Esophagus muscularis mucosa (tissue), 4 donors: ENCODE measurements at regions of chr22 and their contacts with region 1.

Region 1: GRCh38 chr22:30386960-30387827 is at the start of gene RNF215:
- DNase-seq: peak; percentile 93
- H3K4me3 ChIP-seq: peak within 1 kb of the TSS; percentile 63 to 92 (median 64)
- H3K27ac ChIP-seq: peak within 1 kb of the TSS; percentile 75 to 82 (median 78)
- H3K4me1 ChIP-seq: peaks cover 11 to 17% (median 15%) of the 10 kb centered on the region in 4 donors
- H3K27me3 ChIP-seq: no peaks in the 10 kb centered on the region
- CTCF ChIP-seq: peak; percentile 95 to 98 (median 96)
- EP300 ChIP-seq: no peak
- POLR2A ChIP-seq: no peak
- total RNA-seq, gene RNF215: 6.6 to 18.5 (median 15.0) TPM

Region 2: DNA sequence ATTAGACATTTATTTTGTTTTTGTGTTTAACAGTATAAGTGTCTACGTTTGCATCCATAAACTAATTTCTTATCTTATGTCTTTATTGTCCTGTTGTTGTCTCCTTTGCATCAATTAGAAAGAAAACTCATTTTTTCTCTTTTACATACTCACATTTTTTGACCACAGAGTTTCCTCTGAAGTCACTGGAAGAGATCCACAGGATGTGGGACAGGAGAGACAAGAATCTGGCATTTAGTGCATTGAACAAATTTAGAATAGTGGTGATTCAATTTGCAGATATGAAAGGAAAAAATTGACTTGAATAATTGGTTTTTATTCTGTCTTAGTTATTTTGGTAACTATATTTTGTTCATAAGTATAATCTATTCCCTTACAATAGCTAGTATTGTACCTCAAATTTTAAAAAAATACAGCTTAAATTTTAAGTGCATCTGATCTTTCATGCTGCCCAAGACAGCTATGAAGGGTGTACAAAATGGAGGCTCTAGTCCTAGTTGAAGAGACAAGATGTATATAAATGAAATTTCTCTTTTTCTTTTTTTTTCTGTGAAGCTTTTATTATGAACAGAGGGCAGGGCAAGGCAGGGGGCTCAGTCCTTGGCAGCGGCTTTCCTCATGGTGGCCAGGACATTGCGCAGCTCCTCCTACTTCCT is 282.6 kb before region 1 on chr22:
- intact Hi-C with region 1: loop called (anchors 5 kb)
- DNase-seq: no peak
- H3K4me3 ChIP-seq: no peak overlapping the region
- H3K27ac ChIP-seq: no peak overlapping the region
- H3K4me1 ChIP-seq: no peaks in the 10 kb centered on the region
- H3K27me3 ChIP-seq: peaks cover 0 to 5% (median 0%) of the 10 kb centered on the region in 4 donors
- CTCF ChIP-seq: no peak
- EP300 ChIP-seq: no peak
- POLR2A ChIP-seq: no peak

Region 3: GRCh38 chr22:30262917-30263741 is 124.1 kb before region 1 on chr22:
- intact Hi-C with region 1: loop called (anchors 1 kb)
- DNase-seq: no peak
- H3K4me3 ChIP-seq: peak overlapping the region; percentile 5 to 45 (median 32)
- H3K27ac ChIP-seq: no peak overlapping the region
- H3K4me1 ChIP-seq: peaks cover 5 to 14% (median 12%) of the 10 kb centered on the region in 4 donors
- H3K27me3 ChIP-seq: peaks cover 0 to 4% (median 0%) of the 10 kb centered on the region in 4 donors
- CTCF ChIP-seq: peak; percentile 95 to 99 (median 98)
- EP300 ChIP-seq: no peak
- POLR2A ChIP-seq: no peak

Region 4: DNA sequence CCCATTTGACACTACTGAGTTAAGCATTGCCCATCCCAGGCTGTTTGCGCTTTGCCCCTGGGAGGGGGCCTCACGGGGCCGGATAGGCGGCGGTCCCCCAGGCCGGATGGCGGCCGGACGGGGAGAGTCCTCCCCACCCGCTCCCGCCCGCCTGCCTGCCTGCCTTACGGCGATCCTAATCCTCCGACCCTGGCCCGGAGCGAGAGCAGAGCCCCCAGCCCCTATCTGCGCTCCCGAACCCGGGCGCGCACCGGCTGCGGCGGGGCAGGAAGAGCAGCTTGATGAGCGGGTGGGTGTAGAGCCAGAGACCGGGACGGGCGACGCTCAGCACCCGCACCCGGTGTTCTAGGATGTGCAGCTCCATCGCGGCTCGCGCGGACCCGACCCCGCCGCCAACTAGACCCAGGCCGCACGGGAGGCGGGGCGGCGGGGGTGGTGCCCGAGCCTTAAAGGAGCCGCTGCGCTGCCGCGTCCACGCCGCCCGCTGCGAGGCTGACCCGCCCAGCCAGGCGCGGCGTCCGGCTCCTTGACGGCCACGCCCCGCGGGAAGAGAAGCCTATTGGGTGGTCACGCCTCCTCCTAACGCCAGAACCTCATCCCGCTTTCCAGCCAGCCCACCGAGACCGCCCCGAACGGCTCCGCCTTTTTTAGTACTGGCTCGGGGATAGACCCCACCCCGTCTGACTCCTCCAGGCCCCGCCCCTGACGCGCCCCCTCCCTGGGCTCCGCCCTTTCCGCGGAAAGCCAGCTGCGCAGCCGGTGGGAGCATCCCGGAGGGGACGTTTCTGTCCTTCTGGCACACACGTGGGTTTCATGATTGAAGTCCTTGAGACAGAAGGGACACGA is 97.8 kb before region 1 on chr22 and contains the start of gene CASTOR1:
- intact Hi-C with region 1: loop called (anchors 1 kb)
- DNase-seq: peak; percentile 100
- H3K4me3 ChIP-seq: peak within 1 kb of the TSS; percentile 76 to 99 (median 92)
- H3K27ac ChIP-seq: peak within 1 kb of the TSS; percentile 94 to 99 (median 98)
- H3K4me1 ChIP-seq: peaks cover 41 to 52% (median 50%) of the 10 kb centered on the region in 4 donors
- H3K27me3 ChIP-seq: no peaks in the 10 kb centered on the region
- CTCF ChIP-seq: peak in 1 of 3 experiments; percentile 6
- EP300 ChIP-seq: no peak
- POLR2A ChIP-seq: peak; percentile 65
- total RNA-seq, gene CASTOR1: 16.5 to 19.4 (median 17.8) TPM

Region 5: DNA sequence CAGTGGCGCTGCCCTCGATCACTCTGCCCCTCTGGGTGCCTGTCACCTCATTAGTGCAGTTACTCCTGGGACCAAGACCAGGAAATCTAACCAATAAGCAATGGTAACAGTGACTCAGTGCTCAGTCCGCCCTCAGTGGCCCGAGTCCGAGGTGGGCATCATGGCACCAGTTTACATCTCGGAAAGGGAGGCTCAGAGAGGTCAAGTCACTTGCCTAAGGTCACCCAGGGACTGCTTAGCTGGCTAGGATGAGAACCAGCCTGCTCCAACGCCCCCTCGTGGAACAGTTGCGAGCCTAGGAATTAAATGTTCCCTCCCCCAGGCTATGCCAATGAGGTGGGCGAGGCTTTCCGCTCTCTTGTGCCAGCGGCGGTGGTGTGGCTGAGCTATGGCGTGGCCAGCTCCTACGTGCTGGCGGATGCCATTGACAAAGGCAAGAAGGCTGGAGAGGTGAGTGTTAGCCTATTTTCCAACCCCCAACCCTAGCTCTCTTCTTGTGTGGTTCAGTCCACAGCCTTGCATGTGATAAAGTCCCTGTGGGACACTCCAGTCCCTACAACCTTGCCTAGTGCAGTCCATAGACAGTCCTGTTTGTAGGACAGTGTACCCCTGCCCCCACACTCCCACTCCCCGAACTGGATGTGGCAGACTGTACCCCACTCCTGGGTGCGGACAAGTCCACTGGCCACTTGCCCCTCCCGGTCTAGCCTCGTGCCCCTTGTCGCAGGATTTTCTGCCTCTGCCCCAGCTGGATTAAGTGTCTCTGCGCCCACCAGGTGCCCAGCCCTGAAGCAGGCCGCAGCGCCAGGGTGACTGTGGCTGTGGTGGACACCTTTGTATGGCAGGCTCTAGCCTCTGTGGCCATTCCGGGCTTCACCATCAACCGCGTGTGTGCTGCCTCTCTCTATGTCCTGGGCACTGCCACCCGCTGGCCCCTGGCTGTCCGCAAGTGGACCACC is 39.5 kb after region 1 on chr22:
- intact Hi-C with region 1: loop called (anchors 5 kb)
- DNase-seq: peak; percentile 94
- H3K4me3 ChIP-seq: peak overlapping the region; percentile 62 to 78 (median 67)
- H3K27ac ChIP-seq: peak overlapping the region; percentile 79 to 96 (median 94)
- H3K4me1 ChIP-seq: peaks cover 36 to 46% (median 44%) of the 10 kb centered on the region in 4 donors
- H3K27me3 ChIP-seq: no peaks in the 10 kb centered on the region
- CTCF ChIP-seq: peak; percentile 62 to 76 (median 75)
- EP300 ChIP-seq: no peak
- POLR2A ChIP-seq: no peak